ENCODE measurements at regions of chr2 and their contacts with region 1.

Region 1: GRCh38 chr2:169584005-169584877 is at the start of gene PPIG:
- DNase-seq: peak; percentile 85
- ATAC-seq: peak; percentile 95
- H3K4me3 Mint-ChIP-seq: peak within 1 kb of the TSS; percentile 95
- H3K27ac Mint-ChIP-seq: peak within 1 kb of the TSS; percentile 98
- H3K4me1 Mint-ChIP-seq: peaks cover 22% of the 10 kb centered on the region
- H3K27me3 Mint-ChIP-seq: no peaks in the 10 kb centered on the region
- total RNA-seq, gene PPIG: 62.4 to 64.4 TPM

Region 2: DNA sequence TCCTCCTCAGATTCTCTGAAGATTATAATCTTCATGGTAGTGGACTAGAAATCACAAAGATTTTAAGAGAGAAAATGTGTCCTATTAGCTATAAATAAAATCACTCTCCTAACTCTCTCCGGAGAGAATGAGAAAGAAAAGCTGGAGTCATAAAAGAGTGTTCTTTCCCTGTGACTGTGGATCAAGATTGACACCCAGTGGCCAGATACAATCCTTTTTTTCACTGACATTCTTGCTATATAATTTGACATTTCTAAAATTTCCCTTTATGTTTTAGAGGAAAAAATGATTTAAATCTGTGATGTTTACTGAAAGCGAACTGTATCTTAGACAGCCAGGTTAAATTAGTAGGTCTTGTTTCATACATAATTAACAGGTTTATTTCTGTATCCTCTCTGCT is 186.5 kb before region 1 on chr2:
- POLR2A ChIA-PET with region 1: no interaction called
- DNase-seq: no peak
- ATAC-seq: no peak
- H3K4me3 Mint-ChIP-seq: no peak overlapping the region
- H3K27ac Mint-ChIP-seq: no peak overlapping the region
- H3K4me1 Mint-ChIP-seq: peaks cover 3% of the 10 kb centered on the region
- H3K27me3 Mint-ChIP-seq: peaks cover 13% of the 10 kb centered on the region

Region 3: DNA sequence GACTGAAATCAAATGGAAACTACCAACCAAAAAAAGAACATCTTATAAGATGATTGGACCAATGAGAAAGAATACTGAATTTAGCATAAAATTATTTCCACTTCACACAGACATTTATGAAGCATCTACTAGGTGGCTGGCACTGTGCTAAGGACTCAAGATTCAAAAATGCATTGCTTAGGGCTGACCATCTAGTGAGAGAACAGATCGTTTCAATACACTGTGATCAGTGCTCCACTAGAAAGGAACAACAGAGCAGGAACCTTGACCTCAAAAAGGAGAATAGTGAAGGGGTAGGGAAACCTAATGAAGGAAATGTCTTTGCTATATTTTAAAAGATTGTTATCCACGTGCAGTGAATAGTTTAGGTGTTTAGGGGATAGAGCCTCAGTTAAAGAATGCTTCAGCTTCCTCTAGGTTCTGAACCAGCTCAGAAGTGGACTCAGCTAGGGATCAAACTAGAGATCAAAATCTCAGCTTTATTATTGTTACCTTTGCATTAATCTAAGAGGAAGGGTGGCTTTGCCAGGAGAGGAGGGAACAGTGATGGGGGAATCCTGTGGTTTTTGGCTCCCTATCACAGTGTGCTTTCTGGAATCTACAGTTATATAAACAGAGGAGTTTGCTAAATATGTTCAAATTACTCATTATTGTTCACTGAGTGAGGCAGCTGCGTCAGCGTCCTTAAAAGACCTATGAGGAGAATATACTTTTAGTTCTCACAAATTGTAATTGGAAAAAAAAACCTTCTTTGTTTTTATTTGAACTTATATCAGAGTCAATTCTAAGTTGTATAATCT is 121.1 kb before region 1 on chr2:
- POLR2A ChIA-PET with region 1: no interaction called
- DNase-seq: no peak
- ATAC-seq: peak; percentile 13
- H3K4me3 Mint-ChIP-seq: no peak overlapping the region
- H3K27ac Mint-ChIP-seq: no peak overlapping the region
- H3K4me1 Mint-ChIP-seq: no peaks in the 10 kb centered on the region
- H3K27me3 Mint-ChIP-seq: peaks cover 2% of the 10 kb centered on the region

Region 4: GRCh38 chr2:169479257-169480078 is 104.8 kb before region 1 on chr2 and contains the start of gene BBS5:
- POLR2A ChIA-PET with region 1: interaction called, 11 read pairs
- DNase-seq: peak; percentile 83
- ATAC-seq: peak; percentile 98
- H3K4me3 Mint-ChIP-seq: peak within 1 kb of the TSS; percentile 89
- H3K27ac Mint-ChIP-seq: peak within 1 kb of the TSS; percentile 39
- H3K4me1 Mint-ChIP-seq: peaks cover 15% of the 10 kb centered on the region
- H3K27me3 Mint-ChIP-seq: no peaks in the 10 kb centered on the region
- total RNA-seq, gene BBS5: 2.8 to 3.2 TPM

Region 5: GRCh38 chr2:169513926-169514325 is 70.3 kb before region 1 on chr2:
- POLR2A ChIA-PET with region 1: no interaction called
- DNase-seq: no peak
- ATAC-seq: no peak
- H3K4me3 Mint-ChIP-seq: no peak overlapping the region
- H3K27ac Mint-ChIP-seq: no peak overlapping the region
- H3K4me1 Mint-ChIP-seq: no peaks in the 10 kb centered on the region
- H3K27me3 Mint-ChIP-seq: no peaks in the 10 kb centered on the region

Region 6: DNA sequence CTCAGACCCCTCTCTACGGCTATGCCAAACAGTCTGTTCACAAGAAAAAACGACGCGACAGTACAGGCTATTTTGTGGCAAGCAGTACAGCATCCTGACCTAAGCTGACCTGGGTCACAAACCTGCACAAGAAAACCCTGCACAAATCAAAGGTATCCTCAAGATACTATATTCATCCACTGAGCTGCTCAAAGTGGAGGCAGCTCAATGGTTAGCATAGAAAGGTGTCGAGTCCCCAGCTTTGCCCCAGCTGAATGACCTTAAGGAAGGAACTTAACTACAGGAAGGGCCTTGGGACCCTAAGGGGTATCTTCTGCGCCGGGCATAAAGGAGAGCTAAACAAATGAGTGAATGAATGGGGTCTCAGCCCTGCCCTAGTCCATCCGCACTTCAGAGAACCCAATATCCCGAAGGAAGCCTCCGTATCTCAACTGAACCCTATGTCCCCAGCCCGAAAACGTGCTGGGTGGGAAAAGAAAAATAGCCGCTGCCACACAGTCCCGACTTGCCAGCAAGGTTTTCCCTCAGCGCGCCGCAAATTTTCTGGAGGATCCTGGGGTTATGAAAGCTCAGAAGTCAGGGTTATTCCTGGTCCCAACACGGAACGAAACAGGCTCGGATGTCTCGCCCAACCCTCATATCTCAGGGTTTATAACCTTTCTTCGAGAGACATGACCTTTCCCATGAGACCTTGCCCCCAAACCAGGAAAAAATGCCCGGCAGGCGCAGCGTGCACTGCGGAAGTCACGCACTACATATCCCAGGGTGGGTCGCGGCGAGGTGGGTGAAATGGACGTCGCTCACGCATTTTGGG is 10.9 kb before region 1 on chr2 and contains the start of gene FASTKD1:
- POLR2A ChIA-PET with region 1: interaction called, 26 read pairs
- DNase-seq: peak; percentile 80
- ATAC-seq: peak; percentile 98
- H3K4me3 Mint-ChIP-seq: peak within 1 kb of the TSS; percentile 95
- H3K27ac Mint-ChIP-seq: peak within 1 kb of the TSS; percentile 85
- H3K4me1 Mint-ChIP-seq: peaks cover 13% of the 10 kb centered on the region
- H3K27me3 Mint-ChIP-seq: no peaks in the 10 kb centered on the region
- total RNA-seq, gene FASTKD1: 35.0 to 38.8 TPM

Region 7: GRCh38 chr2:169599568-169599967 is 15.3 kb after region 1 on chr2:
- POLR2A ChIA-PET with region 1: no interaction called
- DNase-seq: no peak
- ATAC-seq: no peak
- H3K4me3 Mint-ChIP-seq: no peak overlapping the region
- H3K27ac Mint-ChIP-seq: no peak overlapping the region
- H3K4me1 Mint-ChIP-seq: peaks cover 5% of the 10 kb centered on the region
- H3K27me3 Mint-ChIP-seq: no peaks in the 10 kb centered on the region

Measured in activated naive CD8-positive, alpha-beta T cell treated with anti-CD3 and anti-CD28 coated beads, Interleukin-2, amount 10 ng/mL, durations not matched to agents 7 days and 5 days (primary cell).